Activated T-helper 2 cell treated with anti-CD3 and anti-CD28 coated beads, Interferon-gamma antibody, Interleukin-2, Interleukin-4, amounts not matched to agents 10 μg/mL and 5 μg/mL and 100 μg/mL, durations not matched to agents 14 hours and 24 hours and 36 hours (primary cell): ENCODE measurements at regions of chr10 and their contacts with region 1.

Region 1: GRCh38 chr10:122953827-122954730 is at the start of gene C10orf88:
- DNase-seq: peak; percentile 97
- H3K4me3 Mint-ChIP-seq: peak within 1 kb of the TSS; percentile 88
- H3K27ac Mint-ChIP-seq: peak within 1 kb of the TSS; percentile 73
- H3K4me1 Mint-ChIP-seq: peaks cover 22% of the 10 kb centered on the region
- H3K27me3 Mint-ChIP-seq: peaks cover 17% of the 10 kb centered on the region
- total RNA-seq, gene C10orf88: 9.1 and 10.0 TPM in 2 replicates

Region 2: DNA sequence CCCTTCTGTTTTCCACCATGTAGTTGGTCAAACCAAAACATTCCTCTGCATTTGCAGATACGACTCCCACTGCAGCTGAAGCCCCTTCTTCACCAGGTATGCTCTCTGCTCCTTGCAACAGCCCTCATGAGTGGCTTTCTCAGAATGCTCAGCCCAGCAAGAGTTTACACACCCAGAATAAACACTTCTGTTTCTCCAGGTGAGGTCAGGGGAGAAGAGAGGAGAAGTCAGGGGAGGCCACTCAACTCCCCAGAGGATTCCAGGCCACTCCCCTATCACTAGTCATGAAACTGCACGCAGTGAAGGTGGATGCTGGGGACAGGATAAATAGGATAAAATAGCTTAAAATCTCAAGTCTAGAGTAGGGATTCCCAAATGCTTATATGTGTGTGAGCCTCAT is 139.6 kb before region 1 on chr10:
- intact Hi-C with region 1: no loop called
- DNase-seq: no peak
- H3K4me3 Mint-ChIP-seq: no peak overlapping the region
- H3K27ac Mint-ChIP-seq: no peak overlapping the region
- H3K4me1 Mint-ChIP-seq: no peaks in the 10 kb centered on the region
- H3K27me3 Mint-ChIP-seq: peaks cover 18% of the 10 kb centered on the region

Region 3: GRCh38 chr10:123008439-123009205 is 54.5 kb after region 1 on chr10 and contains the starts of genes ACADSB and IKZF5:
- intact Hi-C with region 1: loop called (anchors 1 kb)
- DNase-seq: peak; percentile 94
- H3K4me3 Mint-ChIP-seq: peak within 1 kb of the TSS; percentile 98
- H3K27ac Mint-ChIP-seq: peak within 1 kb of the TSS; percentile 99
- H3K4me1 Mint-ChIP-seq: peaks cover 35% of the 10 kb centered on the region
- H3K27me3 Mint-ChIP-seq: no peaks in the 10 kb centered on the region
- total RNA-seq, gene ACADSB: 21.4 and 23.3 TPM in 2 replicates
- total RNA-seq, gene IKZF5: 15.0 and 16.1 TPM in 2 replicates